ENCODE measurements at regions of chr7 and their contacts with region 1.

Region 1: GRCh38 chr7:3065724-3066143 is 22.1 kb upstream of the CARD11 start:
- DNase-seq: peak; percentile 58
- H3K4me3 Mint-ChIP-seq: peak overlapping the region; percentile 9
- H3K27ac Mint-ChIP-seq: peak overlapping the region; percentile 66
- H3K4me1 Mint-ChIP-seq: peaks cover 85% of the 10 kb centered on the region
- H3K27me3 Mint-ChIP-seq: no peaks in the 10 kb centered on the region

Region 2: DNA sequence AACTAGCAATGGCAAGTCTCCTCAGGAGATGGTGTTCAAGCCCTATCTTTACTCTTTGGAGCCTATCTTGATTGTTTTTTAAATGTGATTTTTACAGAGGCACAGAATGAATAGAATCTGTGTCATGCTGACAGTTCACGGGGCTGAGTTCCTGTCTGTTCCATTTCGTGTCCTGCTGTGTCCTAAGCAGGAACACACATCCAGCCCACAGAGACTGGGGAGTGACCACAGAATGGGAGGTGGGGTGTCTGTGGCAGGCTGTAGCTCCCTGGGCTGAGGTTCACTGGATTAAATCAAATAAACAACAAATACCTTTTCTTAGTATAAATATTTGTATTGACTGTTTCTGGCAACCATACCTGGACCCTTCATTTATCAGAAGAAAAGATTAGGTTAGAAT is 51.3 kb after region 1 on chr7:
- CTCF ChIA-PET with region 1: interaction called, 10 read pairs
- POLR2A ChIA-PET with region 1: no interaction called
- DNase-seq: no peak
- H3K4me3 Mint-ChIP-seq: peak overlapping the region; percentile 76
- H3K27ac Mint-ChIP-seq: peak overlapping the region; percentile 89
- H3K4me1 Mint-ChIP-seq: peaks cover 72% of the 10 kb centered on the region
- H3K27me3 Mint-ChIP-seq: no peaks in the 10 kb centered on the region

Measured in activated CD4-positive, alpha-beta T cell treated with anti-CD3 and anti-CD28 coated beads, Interleukin-2, amount 10 ng/mL, durations not matched to agents 7 days and 5 days (primary cell).